Activated T-helper 1 cell treated with anti-CD3 and anti-CD28 coated beads, Interleukin-12 subunit alpha, Interleukin-12 subunit beta, Interleukin-2, Interleukin-4 antibody, amounts not matched to agents 30 ng/mL and 10 ng/mL and 1 ng/mL, durations not matched to agents 14 hours and 24 hours and 36 hours (primary cell): ENCODE measurements at regions of chr6 and their contacts with region 1.

Region 1: DNA sequence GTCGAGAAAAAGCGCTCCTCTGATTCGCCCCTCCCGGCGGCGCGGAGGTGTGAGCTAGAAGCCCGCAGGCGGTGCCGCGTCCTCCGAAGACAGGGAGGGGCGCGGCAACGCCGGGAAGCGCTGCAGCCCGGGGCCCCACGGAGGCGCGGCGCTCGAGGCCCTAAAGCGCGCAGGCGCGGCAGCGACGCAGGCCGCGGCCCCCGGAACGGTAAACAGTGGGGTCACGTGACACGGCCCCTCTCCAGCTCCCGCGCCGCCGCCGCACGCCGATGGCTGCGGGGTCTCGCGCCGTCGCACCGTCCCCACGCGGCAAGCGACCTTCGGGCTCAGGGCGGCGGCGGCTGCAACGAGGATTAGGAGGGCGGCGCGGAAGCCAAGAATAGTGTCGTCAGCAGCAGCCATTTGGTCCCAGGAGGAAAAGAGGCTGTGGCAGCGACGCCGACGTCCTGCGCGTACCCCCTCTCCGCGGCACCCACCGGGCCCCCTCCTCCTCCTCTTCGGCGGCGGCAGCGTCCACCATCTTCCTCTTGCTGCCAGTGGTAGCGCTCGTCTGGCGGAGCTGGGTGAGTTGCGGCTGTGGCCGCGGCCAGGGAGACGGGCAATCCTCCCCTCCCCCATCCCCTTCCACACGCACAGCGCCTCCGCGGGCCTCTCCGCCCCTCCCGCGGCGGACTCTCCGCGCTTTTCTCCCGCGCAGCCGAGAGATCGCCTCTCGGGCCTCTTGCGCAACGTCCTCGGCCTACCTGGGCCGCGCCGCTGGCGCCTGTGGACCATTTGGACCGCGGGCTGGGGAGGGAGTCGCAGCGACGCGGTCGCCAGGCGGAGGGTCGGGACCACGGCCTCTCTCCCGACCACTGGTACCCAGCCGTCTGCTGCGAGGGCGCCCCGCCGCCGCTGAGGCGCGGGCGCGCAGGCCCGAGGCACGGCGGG is at the start of gene PHF3:
- DNase-seq: peak; percentile 86
- H3K4me3 Mint-ChIP-seq: peak within 1 kb of the TSS; percentile 100
- H3K27ac Mint-ChIP-seq: peak within 1 kb of the TSS; percentile 98
- H3K4me1 Mint-ChIP-seq: peaks cover 52% of the 10 kb centered on the region
- H3K27me3 Mint-ChIP-seq: no peaks in the 10 kb centered on the region
- total RNA-seq, gene PHF3: 42.7 and 45.3 TPM in 2 replicates

Region 2: DNA sequence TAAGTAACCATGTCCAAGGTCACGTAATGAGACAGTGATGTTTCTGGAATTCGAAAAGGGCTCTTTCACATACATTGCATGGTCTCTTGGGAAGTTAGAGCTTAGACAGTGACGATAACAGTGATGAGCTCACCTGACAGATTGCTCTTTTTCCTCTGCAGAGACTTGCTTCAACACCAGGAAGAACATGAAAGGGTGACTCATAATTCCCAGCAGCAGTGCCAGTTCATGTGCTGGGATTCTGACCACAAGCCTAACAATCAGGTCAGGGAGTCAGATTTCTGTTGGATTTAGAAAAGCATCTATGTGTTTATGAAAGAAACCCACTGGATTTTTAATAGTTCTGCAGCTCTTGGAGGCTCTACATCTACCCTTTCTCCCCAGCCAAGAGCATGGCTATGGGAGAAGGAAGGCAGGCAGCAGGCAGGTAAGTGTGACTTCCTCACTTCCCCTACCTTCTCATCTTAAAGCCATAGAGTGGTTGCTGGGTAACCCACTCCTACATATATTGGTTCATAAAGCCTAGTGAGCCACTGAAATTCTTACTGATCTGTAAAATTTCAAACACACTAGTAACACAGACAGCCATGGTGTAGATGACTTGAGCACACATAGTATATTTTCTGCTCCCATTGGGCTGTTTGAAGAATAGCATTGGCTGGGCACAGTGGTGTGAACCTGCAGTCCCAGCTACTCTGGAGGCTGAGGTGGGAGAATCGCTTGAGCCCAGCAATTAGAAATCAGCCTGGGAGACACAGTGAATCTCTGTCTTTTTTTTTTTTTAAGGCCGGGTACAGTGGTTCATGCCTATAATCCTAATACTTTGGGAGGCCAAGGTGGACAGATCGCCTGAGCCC is 108.0 kb before region 1 on chr6:
- intact Hi-C with region 1: loop called (anchors 5 kb)
- DNase-seq: no peak
- H3K4me3 Mint-ChIP-seq: no peak overlapping the region
- H3K27ac Mint-ChIP-seq: peak overlapping the region; percentile 29
- H3K4me1 Mint-ChIP-seq: peaks cover 41% of the 10 kb centered on the region
- H3K27me3 Mint-ChIP-seq: peaks cover 2% of the 10 kb centered on the region

Region 3: GRCh38 chr6:63598049-63599036 is 37.5 kb before region 1 on chr6:
- intact Hi-C with region 1: loop called (anchors 1 kb)
- DNase-seq: peak; percentile 63
- H3K4me3 Mint-ChIP-seq: peak overlapping the region; percentile 86
- H3K27ac Mint-ChIP-seq: no peak overlapping the region
- H3K4me1 Mint-ChIP-seq: peaks cover 16% of the 10 kb centered on the region
- H3K27me3 Mint-ChIP-seq: peaks cover 10% of the 10 kb centered on the region

Region 4: GRCh38 chr6:63609231-63609630 is 26.6 kb before region 1 on chr6:
- intact Hi-C with region 1: no loop called
- DNase-seq: no peak
- H3K4me3 Mint-ChIP-seq: no peak overlapping the region
- H3K27ac Mint-ChIP-seq: no peak overlapping the region
- H3K4me1 Mint-ChIP-seq: no peaks in the 10 kb centered on the region
- H3K27me3 Mint-ChIP-seq: peaks cover 7% of the 10 kb centered on the region

Region 5: DNA sequence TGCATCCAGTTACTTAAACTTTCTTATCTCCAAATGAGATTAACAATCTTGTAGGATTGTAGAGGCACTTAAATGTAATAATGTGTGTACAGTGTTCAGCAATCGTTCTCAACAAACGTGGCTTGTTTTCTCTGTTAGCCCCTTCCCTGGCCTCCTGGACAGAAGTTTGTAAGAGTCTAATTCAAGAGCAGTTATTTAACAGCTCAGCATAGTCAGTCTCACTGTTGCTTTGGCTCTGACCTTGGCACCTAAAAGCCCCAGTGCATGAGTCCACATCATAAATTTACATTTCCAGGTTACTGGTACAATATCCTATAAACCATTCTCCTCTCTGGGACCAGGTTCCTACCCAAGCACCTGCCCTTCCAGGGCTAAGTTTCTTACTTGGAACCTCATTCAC is 11.8 kb before region 1 on chr6:
- intact Hi-C with region 1: loop called (anchors 1 kb)
- DNase-seq: no peak
- H3K4me3 Mint-ChIP-seq: no peak overlapping the region
- H3K27ac Mint-ChIP-seq: no peak overlapping the region
- H3K4me1 Mint-ChIP-seq: no peaks in the 10 kb centered on the region
- H3K27me3 Mint-ChIP-seq: peaks cover 14% of the 10 kb centered on the region

Region 6: DNA sequence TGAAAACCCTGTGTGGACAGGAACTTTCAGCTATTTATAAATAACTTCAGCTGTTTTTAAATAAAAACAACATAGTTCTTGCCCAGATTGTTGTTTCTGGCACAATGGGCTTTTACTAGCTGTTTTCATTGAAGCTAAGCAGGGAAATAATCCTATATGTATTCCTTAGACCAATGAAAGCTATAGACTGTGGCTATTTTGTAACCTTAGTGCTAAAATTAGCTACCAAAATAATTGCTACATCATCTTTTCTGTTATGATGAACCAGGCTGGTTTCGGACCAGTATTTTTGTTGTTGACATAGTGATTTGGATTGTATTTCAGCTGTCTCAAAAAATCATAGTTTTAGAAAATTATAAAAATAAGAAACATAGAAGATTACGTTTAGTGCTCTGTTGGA is 13.4 kb after region 1 on chr6:
- intact Hi-C with region 1: loop called (anchors 2 kb)
- DNase-seq: no peak
- H3K4me3 Mint-ChIP-seq: no peak overlapping the region
- H3K27ac Mint-ChIP-seq: no peak overlapping the region
- H3K4me1 Mint-ChIP-seq: peaks cover 29% of the 10 kb centered on the region
- H3K27me3 Mint-ChIP-seq: no peaks in the 10 kb centered on the region

Region 7: DNA sequence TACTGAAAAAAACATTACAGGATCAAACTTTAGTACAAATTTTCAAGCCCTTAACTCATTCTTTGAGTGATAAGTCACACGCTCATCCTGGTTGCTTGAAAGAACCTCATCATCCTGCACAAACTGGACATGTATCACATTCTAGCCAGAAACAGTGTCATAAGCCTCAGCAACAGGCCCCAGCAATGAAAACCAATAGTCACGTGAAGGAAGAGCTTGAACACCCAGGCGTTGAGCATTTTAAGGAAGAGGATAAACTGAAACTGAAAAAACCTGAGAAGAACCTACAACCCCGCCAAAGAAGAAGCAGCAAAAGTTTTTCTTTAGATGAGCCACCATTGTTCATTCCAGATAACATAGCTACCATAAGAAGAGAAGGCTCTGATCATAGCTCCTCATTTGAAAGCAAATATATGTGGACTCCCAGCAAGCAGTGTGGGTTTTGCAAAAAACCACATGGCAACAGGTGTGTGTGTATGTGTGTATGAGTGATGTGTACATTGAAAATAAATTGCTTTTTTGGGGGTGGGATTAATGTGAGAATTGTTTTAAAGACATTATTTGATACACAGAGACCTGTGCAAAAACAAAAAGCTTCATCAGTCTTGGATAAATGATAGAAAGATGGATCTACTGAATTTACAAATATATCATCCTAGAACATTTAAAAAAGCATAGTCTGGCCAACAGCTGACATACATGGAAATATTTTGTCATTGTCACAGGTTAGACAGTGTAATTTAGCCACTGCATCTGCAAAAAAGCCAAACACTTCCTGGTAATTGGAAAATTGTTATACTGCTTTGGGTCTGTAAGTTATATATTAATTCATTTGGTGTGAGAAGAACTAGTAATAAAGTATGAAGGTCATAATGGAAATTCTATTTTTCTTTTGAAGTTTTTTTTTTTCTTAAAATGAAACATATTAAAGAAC is 49.9 kb after region 1 on chr6:
- intact Hi-C with region 1: loop called (anchors 2 kb)
- DNase-seq: no peak
- H3K4me3 Mint-ChIP-seq: no peak overlapping the region
- H3K27ac Mint-ChIP-seq: no peak overlapping the region
- H3K4me1 Mint-ChIP-seq: peaks cover 32% of the 10 kb centered on the region
- H3K27me3 Mint-ChIP-seq: no peaks in the 10 kb centered on the region

Region 8: GRCh38 chr6:64310214-64310613 is 674.4 kb after region 1 on chr6:
- intact Hi-C with region 1: no loop called
- DNase-seq: no peak
- H3K4me3 Mint-ChIP-seq: no peak overlapping the region
- H3K27ac Mint-ChIP-seq: no peak overlapping the region
- H3K4me1 Mint-ChIP-seq: no peaks in the 10 kb centered on the region
- H3K27me3 Mint-ChIP-seq: no peaks in the 10 kb centered on the region